ENCODE measurements at regions of chr6 and their contacts with region 1.

Region 1: GRCh38 chr6:28335564-28336283 is at the start of gene ZSCAN31:
- DNase-seq: peak; percentile 89
- ATAC-seq: peak; percentile 87
- H3K4me3 ChIP-seq: peak within 1 kb of the TSS; percentile 72 to 98 (median 86)
- H3K4me3 Mint-ChIP-seq: no peak within 1 kb of the TSS
- H3K27ac ChIP-seq: peak within 1 kb of the TSS; percentile 95 to 96
- H3K27ac Mint-ChIP-seq: no peak within 1 kb of the TSS
- H3K4me1 ChIP-seq: peaks cover 11 to 18% of the 10 kb centered on the region in 2 donors
- H3K4me1 Mint-ChIP-seq: no peaks in the 10 kb centered on the region
- H3K27me3 ChIP-seq: no peaks in the 10 kb centered on the region
- H3K27me3 Mint-ChIP-seq: no peaks in the 10 kb centered on the region
- CTCF ChIP-seq: no peak
- total RNA-seq, gene ZSCAN31: 2.9 and 4.6 TPM in 2 replicates

Region 2: GRCh38 chr6:28080631-28081485 is 254.9 kb before region 1 on chr6:
- CTCF ChIA-PET with region 1: no interaction called
- POLR2A ChIA-PET with region 1: no interaction called
- intact Hi-C with region 1: loop called (anchors 2 kb)
- DNase-seq: peak; percentile 98
- ATAC-seq: peak; percentile 67
- H3K4me3 ChIP-seq: peak overlapping the region; percentile 67 to 96 (median 88)
- H3K4me3 Mint-ChIP-seq: peak overlapping the region; percentile 92
- H3K27ac ChIP-seq: peak overlapping the region; percentile 94 to 100
- H3K27ac Mint-ChIP-seq: peak overlapping the region; percentile 98
- H3K4me1 ChIP-seq: peaks cover 10 to 22% of the 10 kb centered on the region in 2 donors
- H3K4me1 Mint-ChIP-seq: peaks cover 36% of the 10 kb centered on the region
- H3K27me3 ChIP-seq: no peaks in the 10 kb centered on the region
- H3K27me3 Mint-ChIP-seq: no peaks in the 10 kb centered on the region
- CTCF ChIP-seq: no peak

Region 3: DNA sequence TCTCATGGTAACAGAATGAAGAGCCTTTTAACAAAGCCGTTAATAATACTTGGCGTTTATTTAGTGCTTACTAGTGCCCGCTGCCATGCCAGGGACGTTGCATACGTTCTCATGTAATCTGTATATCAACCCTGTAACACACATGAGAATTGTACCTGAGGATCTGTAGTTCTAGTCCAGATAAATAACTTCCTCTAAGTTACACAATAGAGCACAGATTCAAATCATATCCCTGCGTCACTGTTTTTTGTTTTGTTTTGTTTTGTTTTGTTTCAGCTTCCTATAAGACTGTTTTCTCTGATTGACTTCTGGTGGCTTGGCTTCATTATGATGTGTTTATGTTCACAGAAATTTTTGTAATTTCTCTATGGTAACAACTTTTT is 210.8 kb before region 1 on chr6:
- CTCF ChIA-PET with region 1: no interaction called
- POLR2A ChIA-PET with region 1: no interaction called
- intact Hi-C with region 1: no loop called
- DNase-seq: peak; percentile 55
- ATAC-seq: peak; percentile 15
- H3K4me3 ChIP-seq: peak overlapping the region; percentile 70 to 91 (median 75)
- H3K4me3 Mint-ChIP-seq: peak overlapping the region; percentile 98
- H3K27ac ChIP-seq: peak overlapping the region; percentile 68 to 74
- H3K27ac Mint-ChIP-seq: peak overlapping the region; percentile 92
- H3K4me1 ChIP-seq: peaks cover 12 to 18% of the 10 kb centered on the region in 2 donors
- H3K4me1 Mint-ChIP-seq: peaks cover 31% of the 10 kb centered on the region
- H3K27me3 ChIP-seq: no peaks in the 10 kb centered on the region
- H3K27me3 Mint-ChIP-seq: no peaks in the 10 kb centered on the region
- CTCF ChIP-seq: no peak

Region 4: DNA sequence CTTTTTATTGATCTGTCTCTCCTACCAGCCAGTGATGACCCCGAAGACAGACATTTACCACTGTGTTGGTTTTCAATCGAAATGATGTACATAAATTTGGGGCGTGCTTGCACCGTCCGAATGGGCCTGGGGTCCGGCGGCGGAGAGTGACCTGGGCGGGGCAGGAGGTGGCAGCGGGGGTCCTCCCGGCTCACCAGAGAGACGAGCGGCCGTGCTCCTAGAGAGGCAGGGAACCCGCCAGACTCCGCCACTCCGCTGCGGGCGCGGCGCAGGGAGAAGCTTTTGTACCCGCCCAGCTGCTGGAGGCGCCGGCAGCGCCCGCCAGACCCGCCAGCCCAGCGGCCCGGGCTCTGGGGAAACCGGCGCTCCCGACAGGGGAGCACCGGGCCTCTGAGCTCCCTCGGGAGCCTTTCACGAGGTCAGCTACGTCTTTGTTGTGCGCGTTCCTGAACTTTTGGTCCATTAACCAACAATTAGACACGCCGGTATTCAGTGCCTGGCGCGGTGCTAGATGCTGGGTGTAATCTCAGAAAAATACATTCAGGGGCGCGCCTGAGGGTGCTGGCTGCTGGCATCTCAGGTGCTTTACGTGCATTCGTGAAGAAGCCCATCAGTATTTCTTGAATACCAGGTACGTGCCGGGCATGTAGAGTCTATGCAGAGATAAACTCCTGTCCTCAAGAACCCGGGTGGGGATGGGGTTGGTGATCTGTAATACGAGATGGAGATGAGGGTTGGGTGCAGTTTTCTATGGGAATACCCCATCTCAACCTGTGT is 54.2 kb before region 1 on chr6 and contains the start of gene PGBD1:
- CTCF ChIA-PET with region 1: no interaction called
- POLR2A ChIA-PET with region 1: no interaction called
- intact Hi-C with region 1: loop called (anchors 5 kb)
- DNase-seq: peak; percentile 63
- ATAC-seq: peak; percentile 87
- H3K4me3 ChIP-seq: peak within 1 kb of the TSS; percentile 45 to 61 (median 53)
- H3K4me3 Mint-ChIP-seq: peak within 1 kb of the TSS; percentile 93
- H3K27ac ChIP-seq: no peak within 1 kb of the TSS
- H3K27ac Mint-ChIP-seq: no peak within 1 kb of the TSS
- H3K4me1 ChIP-seq: peaks cover 7 to 9% of the 10 kb centered on the region in 2 donors
- H3K4me1 Mint-ChIP-seq: peaks cover 9% of the 10 kb centered on the region
- H3K27me3 ChIP-seq: peaks cover 0 to 16% (median 11%) of the 10 kb centered on the region in 4 experiments
- H3K27me3 Mint-ChIP-seq: peaks cover 19% of the 10 kb centered on the region
- CTCF ChIP-seq: no peak
- total RNA-seq, gene PGBD1: 1.8 and 2.4 TPM in 2 replicates

Region 5: DNA sequence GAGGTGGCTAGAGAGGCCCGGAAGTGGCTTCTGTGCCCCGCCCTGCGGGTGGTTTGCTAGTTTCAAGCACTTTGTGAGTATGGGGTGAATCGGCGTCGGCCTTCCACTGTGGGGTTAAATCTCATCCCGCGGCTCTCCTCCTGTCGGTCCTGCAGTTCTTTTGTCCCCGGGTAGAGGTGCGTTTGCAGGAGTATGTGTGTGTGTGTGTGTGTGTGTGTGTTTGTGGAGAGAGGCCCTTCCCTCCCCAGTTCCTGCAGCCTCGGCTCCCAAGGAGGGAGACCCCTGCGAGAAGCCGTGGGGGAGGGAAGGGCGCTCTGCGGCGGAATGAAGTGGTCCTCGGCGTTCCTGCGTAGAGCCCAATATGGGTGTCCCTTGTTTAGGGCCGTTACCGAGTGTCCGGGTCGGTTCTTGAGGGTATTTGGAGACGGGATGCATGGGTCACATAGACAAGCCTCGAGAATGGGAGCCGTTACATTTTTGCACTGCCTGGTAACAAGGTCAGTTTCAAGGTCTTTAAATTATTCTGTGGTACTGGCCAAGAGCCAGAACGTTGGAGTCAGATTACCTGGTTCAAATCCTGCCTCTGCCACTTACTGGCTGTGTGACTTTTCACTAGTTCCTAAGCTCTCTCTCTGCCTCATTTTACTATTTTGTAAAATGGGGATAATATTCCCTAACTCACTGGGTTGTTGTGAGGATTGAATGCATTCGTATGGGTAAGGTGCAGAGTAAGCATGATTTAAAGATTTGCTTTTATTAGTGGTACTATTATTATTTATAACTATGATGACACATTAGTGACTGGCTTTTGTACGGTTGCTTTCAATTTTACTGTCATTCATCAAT is 14.4 kb after region 1 on chr6 and contains the start of gene ZKSCAN3:
- CTCF ChIA-PET with region 1: interaction called, 6 read pairs
- POLR2A ChIA-PET with region 1: interaction called, 4 read pairs
- intact Hi-C with region 1: loop called (anchors 1 kb)
- DNase-seq: peak; percentile 81
- ATAC-seq: peak; percentile 99
- H3K4me3 ChIP-seq: peak within 1 kb of the TSS; percentile 59 to 88 (median 77)
- H3K4me3 Mint-ChIP-seq: peak within 1 kb of the TSS; percentile 92
- H3K27ac ChIP-seq: peak within 1 kb of the TSS; percentile 26 to 58
- H3K27ac Mint-ChIP-seq: peak within 1 kb of the TSS; percentile 83
- H3K4me1 ChIP-seq: peaks cover 10 to 11% of the 10 kb centered on the region in 2 donors
- H3K4me1 Mint-ChIP-seq: peaks cover 23% of the 10 kb centered on the region
- H3K27me3 ChIP-seq: peaks cover 0 to 3% (median 0%) of the 10 kb centered on the region in 4 experiments
- H3K27me3 Mint-ChIP-seq: peaks cover 8% of the 10 kb centered on the region
- CTCF ChIP-seq: no peak
- total RNA-seq, gene ZKSCAN3: 11.0 and 11.9 TPM in 2 replicates